Naive thymus-derived CD4-positive, alpha-beta T cell (primary cell): ENCODE measurements at regions of chr4 and their contacts with region 1.

Region 1: DNA sequence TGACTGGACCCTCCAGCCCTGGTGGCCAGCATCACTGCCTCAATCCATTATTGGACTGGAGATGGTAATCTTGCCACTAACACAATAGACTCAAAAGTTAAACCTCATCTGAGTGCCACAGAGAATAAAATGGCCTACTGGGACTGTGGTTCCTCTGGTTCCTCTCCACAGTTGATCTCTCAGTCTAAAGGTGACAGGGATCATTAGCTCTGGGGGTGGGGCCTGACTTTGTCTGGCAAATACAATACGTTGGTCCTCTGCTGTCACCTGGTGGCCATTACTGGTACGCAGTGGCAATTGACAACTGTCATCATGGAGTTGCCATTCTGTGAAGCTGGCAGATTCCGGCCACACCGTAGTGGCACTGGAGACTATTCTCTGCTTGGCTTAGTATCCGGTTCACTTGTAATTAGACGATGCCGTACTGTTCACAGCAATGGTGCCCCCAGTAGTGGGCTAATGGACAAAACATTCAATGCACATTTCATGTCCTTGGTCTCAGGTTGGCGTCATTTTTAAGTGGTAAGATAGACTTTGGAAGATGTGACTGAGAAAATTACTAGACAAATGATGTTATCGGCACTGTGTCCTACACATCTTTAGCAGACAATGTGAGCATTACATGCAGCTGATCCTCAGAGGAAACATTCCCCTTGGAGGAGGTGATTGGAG is 6.7 kb downstream of the FGFBP2 start:
- DNase-seq: peak; percentile 44 to 73 (median 65)
- ATAC-seq: peak; percentile 98
- H3K4me3 ChIP-seq: no peak overlapping the region
- H3K4me3 Mint-ChIP-seq: no peak overlapping the region
- H3K27ac ChIP-seq: no peak overlapping the region
- H3K27ac Mint-ChIP-seq: no peak overlapping the region
- H3K4me1 ChIP-seq: no peaks in the 10 kb centered on the region
- H3K4me1 Mint-ChIP-seq: peaks cover 0 to 7% (median 0%) of the 10 kb centered on the region in 7 donors
- H3K27me3 ChIP-seq: no peaks in the 10 kb centered on the region
- H3K27me3 Mint-ChIP-seq: peaks cover 0 to 13% (median 0%) of the 10 kb centered on the region in 5 donors

Region 2: GRCh38 chr4:15238720-15239119 is 717.6 kb before region 1 on chr4:
- CTCF ChIA-PET with region 1: interaction called, 3 read pairs
- POLR2A ChIA-PET with region 1: no interaction called
- intact Hi-C with region 1: loop called in 1 of 2 experiments (anchors 1 kb)
- DNase-seq: peak in 5 of 9 donors; percentile 24 to 43 (median 32)
- ATAC-seq: peak; percentile 80
- H3K4me3 ChIP-seq: no peak overlapping the region
- H3K4me3 Mint-ChIP-seq: no peak overlapping the region
- H3K27ac ChIP-seq: no peak overlapping the region
- H3K27ac Mint-ChIP-seq: no peak overlapping the region
- H3K4me1 ChIP-seq: peaks cover 0 to 8% of the 10 kb centered on the region in 2 donors
- H3K4me1 Mint-ChIP-seq: peaks cover 9 to 14% (median 11%) of the 10 kb centered on the region in 7 donors
- H3K27me3 ChIP-seq: no peaks in the 10 kb centered on the region
- H3K27me3 Mint-ChIP-seq: no peaks in the 10 kb centered on the region

Region 3: GRCh38 chr4:15479089-15479912 is 477.0 kb before region 1 on chr4:
- CTCF ChIA-PET with region 1: no interaction called
- POLR2A ChIA-PET with region 1: no interaction called
- intact Hi-C with region 1: loop called in 1 of 2 experiments (anchors 1 kb)
- DNase-seq: peak in 1 of 9 donors; percentile 4
- ATAC-seq: no peak
- H3K4me3 ChIP-seq: no peak overlapping the region
- H3K4me3 Mint-ChIP-seq: no peak overlapping the region
- H3K27ac ChIP-seq: no peak overlapping the region
- H3K27ac Mint-ChIP-seq: no peak overlapping the region
- H3K4me1 ChIP-seq: no peaks in the 10 kb centered on the region
- H3K4me1 Mint-ChIP-seq: no peaks in the 10 kb centered on the region
- H3K27me3 ChIP-seq: no peaks in the 10 kb centered on the region
- H3K27me3 Mint-ChIP-seq: peaks cover 0 to 6% (median 0%) of the 10 kb centered on the region in 5 donors

Region 4: DNA sequence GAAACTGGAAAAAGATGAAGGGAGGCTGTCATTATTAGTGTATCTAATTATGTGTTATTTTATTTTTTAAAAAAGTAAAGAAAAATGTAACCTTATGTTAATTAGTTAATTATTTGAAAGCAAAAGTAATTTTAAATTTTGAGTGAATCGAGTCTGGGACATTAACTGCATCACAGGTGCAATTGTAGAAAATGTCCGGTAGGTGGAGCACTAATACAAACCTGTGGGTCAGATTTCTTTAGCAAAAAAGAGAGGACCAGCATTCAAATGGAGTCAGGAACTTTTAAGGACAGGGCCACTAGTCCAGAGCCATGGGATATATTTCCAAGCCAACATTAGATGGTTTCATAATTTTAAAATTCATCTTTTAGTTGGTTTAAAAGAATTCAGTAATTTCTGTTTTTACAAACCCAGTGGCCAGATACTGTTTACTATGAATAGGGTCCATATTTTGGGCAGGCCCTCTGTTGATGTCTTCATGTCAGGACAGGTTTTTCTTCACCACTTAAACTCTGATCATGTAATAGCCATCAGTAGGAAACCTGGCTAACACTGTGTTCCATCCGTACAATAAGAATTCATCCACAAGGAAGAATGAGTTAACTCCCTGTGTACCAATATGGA is 226.3 kb before region 1 on chr4:
- CTCF ChIA-PET with region 1: interaction called, 5 read pairs
- POLR2A ChIA-PET with region 1: no interaction called
- intact Hi-C with region 1: loop called (anchors 1 kb)
- DNase-seq: peak in 7 of 9 donors; percentile 26 to 62 (median 54)
- ATAC-seq: peak; percentile 78
- H3K4me3 ChIP-seq: no peak overlapping the region
- H3K4me3 Mint-ChIP-seq: no peak overlapping the region
- H3K27ac ChIP-seq: no peak overlapping the region
- H3K27ac Mint-ChIP-seq: no peak overlapping the region
- H3K4me1 ChIP-seq: no peaks in the 10 kb centered on the region
- H3K4me1 Mint-ChIP-seq: peaks cover 7 to 30% (median 18%) of the 10 kb centered on the region in 7 donors
- H3K27me3 ChIP-seq: no peaks in the 10 kb centered on the region
- H3K27me3 Mint-ChIP-seq: no peaks in the 10 kb centered on the region

Region 5: DNA sequence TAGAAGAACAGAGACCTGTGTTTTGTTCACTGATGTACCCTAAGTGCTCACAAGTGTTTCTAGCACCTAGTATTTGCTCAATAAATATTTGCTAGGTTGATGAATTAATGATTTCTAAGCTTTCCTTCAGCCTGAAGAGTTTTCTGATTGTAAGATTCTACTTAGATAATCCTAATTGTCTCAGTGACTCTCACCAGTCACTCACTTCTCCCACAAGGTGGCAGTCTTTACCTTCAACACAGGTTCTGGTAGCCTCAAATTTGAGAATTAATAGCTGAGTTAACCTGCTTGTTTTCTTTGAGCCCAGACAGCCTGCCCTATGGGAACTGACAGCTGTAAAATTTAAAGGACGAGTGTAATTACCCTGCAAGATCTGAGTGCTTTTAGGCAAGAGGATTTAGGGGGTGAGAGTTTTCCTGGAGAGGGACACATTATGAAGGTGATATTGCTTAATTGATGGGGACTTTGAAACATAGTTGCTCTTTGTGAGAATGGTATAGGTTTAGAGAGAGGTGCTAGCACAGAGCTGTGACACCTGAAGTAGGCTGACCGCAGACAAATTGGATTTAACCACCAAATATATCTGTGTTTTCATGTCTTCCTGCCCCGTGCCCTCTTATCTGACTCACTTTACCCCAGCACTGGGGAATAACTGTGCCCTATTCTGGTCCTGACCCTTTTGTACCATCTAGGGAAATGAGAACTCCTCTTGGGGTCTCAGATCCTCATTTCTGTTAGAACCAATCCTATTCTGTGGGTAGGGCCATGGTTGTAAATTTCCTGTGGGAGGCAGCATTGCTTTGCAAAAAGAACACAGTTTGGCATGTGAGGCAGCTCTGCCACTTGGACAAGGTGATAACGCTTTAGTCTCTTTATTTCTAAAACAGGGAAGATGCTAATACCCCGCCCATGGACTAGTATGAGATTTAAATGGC is 150.5 kb before region 1 on chr4:
- CTCF ChIA-PET with region 1: interaction called, 7 read pairs
- POLR2A ChIA-PET with region 1: no interaction called
- intact Hi-C with region 1: loop called (anchors 1 kb)
- DNase-seq: peak in 7 of 9 donors; percentile 37 to 64 (median 52)
- ATAC-seq: peak; percentile 80
- H3K4me3 ChIP-seq: no peak overlapping the region
- H3K4me3 Mint-ChIP-seq: no peak overlapping the region
- H3K27ac ChIP-seq: no peak overlapping the region
- H3K27ac Mint-ChIP-seq: peak overlapping the region in 3 of 9 donors; percentile 21 to 78 (median 60)
- H3K4me1 ChIP-seq: peaks cover 0 to 4% of the 10 kb centered on the region in 2 donors
- H3K4me1 Mint-ChIP-seq: peaks cover 26 to 76% (median 43%) of the 10 kb centered on the region in 7 donors
- H3K27me3 ChIP-seq: no peaks in the 10 kb centered on the region
- H3K27me3 Mint-ChIP-seq: no peaks in the 10 kb centered on the region

Region 6: DNA sequence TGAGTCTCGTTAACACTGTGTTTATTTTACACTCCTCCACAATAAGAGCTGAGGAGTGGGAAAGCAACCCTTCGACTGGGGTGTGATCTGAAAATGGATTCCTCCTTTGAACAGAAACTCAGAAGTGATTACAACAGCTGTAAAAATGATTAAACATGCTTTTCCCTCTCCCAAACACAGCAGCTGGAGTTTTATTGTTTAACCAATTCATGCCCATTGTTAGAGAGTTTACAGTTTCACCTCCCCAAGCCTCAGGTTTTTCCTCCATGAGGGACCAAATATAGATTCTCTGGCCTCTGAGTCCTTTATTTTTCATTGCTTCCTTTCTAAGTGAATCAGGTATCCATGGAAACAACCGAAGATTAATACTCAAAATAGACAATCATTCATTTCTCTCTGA is 532.9 kb after region 1 on chr4:
- CTCF ChIA-PET with region 1: no interaction called
- POLR2A ChIA-PET with region 1: no interaction called
- intact Hi-C with region 1: no loop called
- DNase-seq: no peak
- ATAC-seq: no peak
- H3K4me3 ChIP-seq: no peak overlapping the region
- H3K4me3 Mint-ChIP-seq: no peak overlapping the region
- H3K27ac ChIP-seq: no peak overlapping the region
- H3K27ac Mint-ChIP-seq: no peak overlapping the region
- H3K4me1 ChIP-seq: no peaks in the 10 kb centered on the region
- H3K4me1 Mint-ChIP-seq: no peaks in the 10 kb centered on the region
- H3K27me3 ChIP-seq: no peaks in the 10 kb centered on the region
- H3K27me3 Mint-ChIP-seq: peaks cover 0 to 9% (median 3%) of the 10 kb centered on the region in 5 donors